Activated naive CD4-positive, alpha-beta T cell treated with anti-CD3 and anti-CD28 coated beads for 36 hours (primary cell): ENCODE measurements at regions of chr5 and their contacts with region 1.

Region 1: DNA sequence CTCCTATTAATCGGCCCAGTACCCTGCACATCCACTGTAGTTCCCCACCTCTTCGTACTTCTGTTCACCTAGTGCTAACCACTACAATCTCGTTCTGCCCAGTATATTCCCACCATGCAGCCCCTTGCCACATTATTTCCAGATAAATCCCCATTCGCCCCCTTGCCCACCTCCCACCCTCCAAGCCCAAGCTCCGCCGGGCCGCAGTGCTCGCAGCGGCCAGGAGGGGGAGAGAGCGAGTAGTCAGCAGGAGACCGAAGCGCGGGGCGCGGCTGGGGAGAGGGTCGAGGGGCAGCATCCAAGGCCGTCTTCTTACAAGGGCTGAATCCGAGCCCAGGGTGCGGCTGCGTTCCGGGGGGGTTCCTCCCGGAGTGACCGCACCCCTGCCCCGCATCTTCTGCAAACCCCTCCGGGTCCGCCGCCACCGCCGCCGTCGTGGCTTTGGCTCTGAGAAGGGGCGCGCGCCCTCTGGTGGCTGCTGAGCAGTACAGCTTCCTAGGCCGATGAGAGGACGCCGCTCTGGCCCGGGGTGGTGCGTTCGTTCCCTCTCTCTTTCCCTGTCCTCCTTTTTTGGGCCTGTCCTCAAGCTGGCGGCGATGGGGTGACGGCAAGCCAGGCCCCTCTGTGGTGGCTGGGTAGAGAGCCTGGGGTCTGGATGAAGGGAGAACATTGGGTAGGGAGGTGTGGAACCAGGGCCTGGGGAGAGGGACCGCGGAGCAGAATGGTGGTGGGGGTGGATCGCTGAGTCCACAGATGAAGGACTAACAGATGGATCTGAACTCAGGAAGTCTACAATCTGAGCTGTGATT is 30.0 kb upstream of the PSD2 start:
- DNase-seq: peak; percentile 86
- H3K4me3 Mint-ChIP-seq: peak overlapping the region; percentile 62
- H3K27ac Mint-ChIP-seq: no peak overlapping the region
- H3K4me1 Mint-ChIP-seq: peaks cover 8% of the 10 kb centered on the region
- H3K27me3 Mint-ChIP-seq: peaks cover 24% of the 10 kb centered on the region

Region 2: GRCh38 chr5:139422307-139422893 is 343.2 kb before region 1 on chr5:
- CTCF ChIA-PET with region 1: interaction called, 3 read pairs
- intact Hi-C with region 1: loop called (anchors 1 kb)
- DNase-seq: peak; percentile 77
- H3K4me3 Mint-ChIP-seq: no peak overlapping the region
- H3K27ac Mint-ChIP-seq: no peak overlapping the region
- H3K4me1 Mint-ChIP-seq: peaks cover 5% of the 10 kb centered on the region
- H3K27me3 Mint-ChIP-seq: no peaks in the 10 kb centered on the region

Region 3: DNA sequence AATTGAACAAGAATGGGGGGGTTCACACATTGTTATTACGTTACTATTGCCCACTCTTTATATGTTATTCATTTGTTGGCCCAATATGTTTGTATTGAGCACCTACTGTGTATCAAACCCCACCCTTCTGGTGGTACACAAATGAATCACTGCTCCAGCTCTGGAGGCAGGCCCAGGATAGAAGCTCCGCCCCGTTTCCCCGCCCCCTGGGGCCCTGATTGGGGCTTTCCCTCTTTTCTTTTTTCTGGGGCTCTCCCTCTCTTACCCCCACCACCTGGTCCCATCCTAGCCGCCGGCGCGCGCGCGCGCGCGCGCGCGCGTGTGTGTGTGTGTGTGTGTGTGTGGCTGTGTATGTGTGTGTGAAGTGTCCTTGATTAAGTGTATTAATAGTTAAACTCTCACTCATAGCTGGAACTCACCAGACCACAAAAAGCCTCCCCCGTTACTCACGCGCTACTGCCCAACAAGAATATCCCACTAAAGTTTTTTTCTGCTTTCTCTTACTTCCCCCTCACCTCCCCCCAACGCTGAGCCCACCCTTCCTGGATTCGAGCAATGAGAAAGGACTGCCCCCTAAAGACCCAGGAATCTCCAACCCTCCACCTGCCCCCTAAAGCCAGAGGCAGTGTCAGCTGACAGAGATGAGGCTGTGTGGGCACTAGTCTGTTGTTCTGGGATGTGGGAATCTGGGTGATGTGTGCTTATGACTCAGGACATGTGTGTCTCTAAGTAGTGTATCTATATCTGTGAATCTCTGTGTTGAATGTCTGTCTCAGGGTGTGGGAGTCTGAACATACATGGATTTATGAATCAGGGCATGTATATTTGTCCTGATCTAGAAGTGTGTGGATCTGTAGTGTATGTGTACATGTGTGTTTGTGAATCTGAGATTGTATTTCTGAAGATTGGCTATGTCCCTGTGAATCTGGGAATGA is 113.5 kb before region 1 on chr5:
- CTCF ChIA-PET with region 1: interaction called, 10 read pairs
- intact Hi-C with region 1: no loop called
- DNase-seq: peak; percentile 82
- H3K4me3 Mint-ChIP-seq: no peak overlapping the region
- H3K27ac Mint-ChIP-seq: no peak overlapping the region
- H3K4me1 Mint-ChIP-seq: peaks cover 31% of the 10 kb centered on the region
- H3K27me3 Mint-ChIP-seq: peaks cover 49% of the 10 kb centered on the region

Region 4: GRCh38 chr5:139701056-139701741 is 64.4 kb before region 1 on chr5:
- CTCF ChIA-PET with region 1: interaction called, 12 read pairs
- intact Hi-C with region 1: no loop called
- DNase-seq: no peak
- H3K4me3 Mint-ChIP-seq: no peak overlapping the region
- H3K27ac Mint-ChIP-seq: no peak overlapping the region
- H3K4me1 Mint-ChIP-seq: peaks cover 11% of the 10 kb centered on the region
- H3K27me3 Mint-ChIP-seq: peaks cover 14% of the 10 kb centered on the region

Region 5: GRCh38 chr5:139711067-139711905 is 54.3 kb before region 1 on chr5:
- CTCF ChIA-PET with region 1: interaction called, 11 read pairs
- intact Hi-C with region 1: loop called (anchors 2 kb)
- DNase-seq: peak; percentile 66
- H3K4me3 Mint-ChIP-seq: peak overlapping the region; percentile 62
- H3K27ac Mint-ChIP-seq: no peak overlapping the region
- H3K4me1 Mint-ChIP-seq: peaks cover 10% of the 10 kb centered on the region
- H3K27me3 Mint-ChIP-seq: peaks cover 2% of the 10 kb centered on the region

Region 6: GRCh38 chr5:139745800-139746690 is 19.6 kb before region 1 on chr5:
- CTCF ChIA-PET with region 1: interaction called, 6 read pairs
- intact Hi-C with region 1: loop called (anchors 1 kb)
- DNase-seq: peak; percentile 50
- H3K4me3 Mint-ChIP-seq: peak overlapping the region; percentile 72
- H3K27ac Mint-ChIP-seq: no peak overlapping the region
- H3K4me1 Mint-ChIP-seq: peaks cover 21% of the 10 kb centered on the region
- H3K27me3 Mint-ChIP-seq: peaks cover 15% of the 10 kb centered on the region